ENCODE measurements at regions of chr18 and their contacts with region 1.

Region 1: GRCh38 chr18:10893761-10894160 is 255.6 kb downstream of the PIEZO2 start:
- DNase-seq: no peak
- H3K4me3 ChIP-seq: no peak overlapping the region
- H3K27ac ChIP-seq: no peak overlapping the region
- H3K4me1 ChIP-seq: no peaks in the 10 kb centered on the region
- H3K27me3 ChIP-seq: peaks cover 54% of the 10 kb centered on the region
- CTCF ChIP-seq: no peak

Region 2: DNA sequence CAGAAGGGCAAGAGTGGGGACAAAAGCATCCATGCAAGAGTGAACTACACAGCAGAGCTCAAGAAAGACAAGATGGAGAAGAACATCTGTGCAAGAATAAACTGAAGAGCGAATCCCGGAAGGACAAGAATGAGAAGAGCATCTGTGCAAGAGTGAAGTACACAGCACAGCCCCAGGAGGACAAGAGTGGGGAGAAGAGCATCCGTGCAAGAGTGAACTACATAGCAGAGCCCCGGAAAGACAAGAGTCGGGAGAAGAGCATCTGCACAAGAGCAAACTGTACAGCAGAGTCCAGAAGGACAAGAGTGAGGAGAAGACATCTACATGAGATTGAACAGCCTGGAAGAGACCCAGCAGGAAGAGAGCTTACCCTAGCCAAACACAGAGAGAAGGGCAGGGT is 29.0 kb before region 1 on chr18:
- CTCF ChIA-PET with region 1: no interaction called
- POLR2A ChIA-PET with region 1: no interaction called
- intact Hi-C with region 1: loop called (anchors 1 kb)
- DNase-seq: no peak
- H3K4me3 ChIP-seq: no peak overlapping the region
- H3K27ac ChIP-seq: no peak overlapping the region
- H3K4me1 ChIP-seq: no peaks in the 10 kb centered on the region
- H3K27me3 ChIP-seq: peaks cover 35% of the 10 kb centered on the region; the same call in 1 of the 2 replicates
- CTCF ChIP-seq: no peak

Region 3: GRCh38 chr18:11119962-11120361 is 226.2 kb after region 1 on chr18:
- CTCF ChIA-PET with region 1: no interaction called
- POLR2A ChIA-PET with region 1: no interaction called
- intact Hi-C with region 1: no loop called
- DNase-seq: no peak
- H3K4me3 ChIP-seq: no peak overlapping the region
- H3K27ac ChIP-seq: no peak overlapping the region
- H3K4me1 ChIP-seq: no peaks in the 10 kb centered on the region
- H3K27me3 ChIP-seq: peaks cover 61% of the 10 kb centered on the region
- CTCF ChIP-seq: no peak